Heart right ventricle (tissue), 16 donors: ENCODE measurements at regions of chr18 and their contacts with region 1.

Region 1: DNA sequence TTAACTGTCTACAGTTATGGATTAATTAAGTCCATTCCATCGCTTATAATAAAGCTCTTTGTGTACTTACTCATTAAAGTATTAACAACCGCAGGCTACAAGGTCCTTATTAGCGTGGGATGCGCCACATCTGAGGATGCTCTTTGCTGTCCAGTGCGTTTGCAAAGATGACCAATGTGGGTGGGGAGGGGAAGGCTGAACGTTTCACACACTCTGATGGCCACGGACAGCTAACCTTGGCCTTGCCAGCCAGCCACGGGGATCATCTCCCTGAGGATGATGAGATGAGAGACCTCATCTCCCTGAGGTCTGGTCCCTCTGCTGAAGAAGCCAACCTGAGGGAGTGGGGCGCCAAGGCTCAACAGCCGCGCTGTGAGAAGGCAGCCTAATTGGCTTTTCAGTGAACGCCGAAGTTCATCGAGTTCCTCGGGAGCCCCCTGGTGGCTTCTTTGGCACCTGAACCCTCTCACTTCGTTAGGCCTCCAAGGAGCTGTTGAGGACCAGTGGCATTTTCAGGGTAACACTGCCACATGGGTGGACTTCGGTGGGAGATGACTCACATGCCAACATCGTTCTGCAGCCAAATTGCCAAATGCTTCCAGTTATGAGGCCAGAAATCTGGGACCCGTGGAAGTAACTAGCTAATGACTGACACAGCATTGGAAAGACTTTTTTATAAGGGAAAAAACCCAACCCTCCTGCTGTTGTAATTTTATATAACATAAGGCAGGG is 69.3 kb upstream of the SEC11C start:
- DNase-seq: peak; percentile 84
- ATAC-seq: peak; percentile 76 to 91 (median 85)
- H3K4me3 ChIP-seq: no peak overlapping the region
- H3K27ac ChIP-seq: peak overlapping the region in 1 of 10 donors; percentile 16
- H3K4me1 ChIP-seq: peaks cover 0 to 7% (median 0%) of the 10 kb centered on the region in 9 donors
- H3K27me3 ChIP-seq: no peaks in the 10 kb centered on the region
- CTCF ChIP-seq: peak; percentile 73 to 95 (median 89)

Region 2: DNA sequence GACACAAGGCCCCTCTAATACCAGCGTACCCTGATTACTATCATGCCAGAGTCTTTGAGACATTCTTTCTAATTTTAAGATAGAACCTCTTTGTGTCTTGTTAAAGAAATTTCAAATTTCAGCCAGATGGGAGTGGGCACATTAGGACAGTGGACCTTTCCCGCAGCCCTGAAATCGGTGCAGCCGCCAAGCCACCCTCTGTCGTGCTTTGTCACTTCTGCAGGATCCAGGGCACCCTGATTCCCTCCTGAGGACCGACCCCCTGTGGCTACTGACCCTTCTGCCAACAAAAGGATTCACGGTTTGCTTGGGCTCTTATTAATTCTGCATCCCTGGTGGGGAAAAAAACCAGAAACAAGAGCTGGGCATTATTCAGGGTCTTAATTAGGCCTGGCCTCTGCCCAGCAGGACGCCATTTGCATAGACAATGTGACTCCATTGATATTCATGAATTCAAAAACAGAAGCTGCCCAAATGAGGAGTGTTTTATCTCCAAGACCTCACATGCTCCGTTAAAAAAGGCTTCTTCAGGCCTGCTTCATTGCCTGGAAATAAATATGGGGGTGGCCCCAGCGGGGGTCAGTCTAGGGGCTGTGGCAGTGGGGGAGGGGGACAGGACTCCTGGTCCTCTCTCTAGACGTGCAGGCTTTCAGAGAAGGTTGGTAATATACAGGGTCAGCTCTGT is 558.3 kb before region 1 on chr18:
- intact Hi-C with region 1: loop called in 2 of 10 experiments (anchors 10 kb)
- DNase-seq: no peak
- ATAC-seq: peak in 2 of 8 donors; percentile 31
- H3K4me3 ChIP-seq: no peak overlapping the region
- H3K27ac ChIP-seq: no peak overlapping the region
- H3K4me1 ChIP-seq: no peaks in the 10 kb centered on the region
- H3K27me3 ChIP-seq: no peaks in the 10 kb centered on the region
- CTCF ChIP-seq: no peak

Region 3: DNA sequence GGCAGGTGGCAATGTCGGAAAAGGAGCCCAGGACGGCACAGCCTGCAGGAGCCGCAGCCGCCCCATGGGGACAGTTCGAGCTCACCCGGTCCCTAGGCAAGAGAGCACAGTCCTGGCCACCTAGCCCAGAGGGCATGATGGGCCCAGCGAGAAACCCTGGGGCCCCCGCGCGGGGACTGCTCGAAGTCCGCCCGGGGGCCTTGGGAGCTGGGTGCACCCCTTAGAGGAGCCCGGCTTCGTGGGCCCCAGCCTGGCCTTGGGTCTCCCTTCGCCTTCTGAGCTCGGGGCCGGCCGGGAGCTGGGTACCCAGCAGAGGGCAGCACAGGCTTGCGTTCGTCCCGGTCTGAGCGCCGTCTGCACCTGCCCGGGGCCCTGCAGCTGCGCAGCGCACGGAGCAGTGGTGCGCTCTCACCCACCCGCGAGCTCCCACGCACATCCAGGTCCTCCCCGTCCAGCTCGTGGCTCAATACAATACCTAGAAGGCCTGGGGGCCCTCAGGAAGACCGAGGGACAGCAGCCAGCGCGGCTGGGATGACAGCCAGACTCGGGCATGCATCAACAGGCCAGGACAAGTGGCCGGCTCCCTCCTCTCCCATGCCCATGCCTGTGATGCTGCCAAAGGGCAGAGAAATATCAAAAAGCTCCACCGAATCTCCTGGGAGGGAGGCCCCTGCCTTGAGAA is 301.9 kb before region 1 on chr18:
- intact Hi-C with region 1: loop called in 3 of 10 experiments (anchors 1 to 5 kb)
- DNase-seq: peak; percentile 69 to 77
- ATAC-seq: peak; percentile 88 to 94 (median 92)
- H3K4me3 ChIP-seq: peak overlapping the region in 9 of 10 donors; percentile 9 to 47 (median 33)
- H3K27ac ChIP-seq: peak overlapping the region in 4 of 10 donors; percentile 21 to 30 (median 24)
- H3K4me1 ChIP-seq: peaks cover 4 to 23% (median 13%) of the 10 kb centered on the region in 9 donors
- H3K27me3 ChIP-seq: peaks cover 0 to 48% (median 0%) of the 10 kb centered on the region in 7 donors
- CTCF ChIP-seq: peak; percentile 63 to 96 (median 85)